Esophagus muscularis mucosa (tissue), 4 donors: ENCODE measurements at regions of chr2 and their contacts with region 1.

Region 1: DNA sequence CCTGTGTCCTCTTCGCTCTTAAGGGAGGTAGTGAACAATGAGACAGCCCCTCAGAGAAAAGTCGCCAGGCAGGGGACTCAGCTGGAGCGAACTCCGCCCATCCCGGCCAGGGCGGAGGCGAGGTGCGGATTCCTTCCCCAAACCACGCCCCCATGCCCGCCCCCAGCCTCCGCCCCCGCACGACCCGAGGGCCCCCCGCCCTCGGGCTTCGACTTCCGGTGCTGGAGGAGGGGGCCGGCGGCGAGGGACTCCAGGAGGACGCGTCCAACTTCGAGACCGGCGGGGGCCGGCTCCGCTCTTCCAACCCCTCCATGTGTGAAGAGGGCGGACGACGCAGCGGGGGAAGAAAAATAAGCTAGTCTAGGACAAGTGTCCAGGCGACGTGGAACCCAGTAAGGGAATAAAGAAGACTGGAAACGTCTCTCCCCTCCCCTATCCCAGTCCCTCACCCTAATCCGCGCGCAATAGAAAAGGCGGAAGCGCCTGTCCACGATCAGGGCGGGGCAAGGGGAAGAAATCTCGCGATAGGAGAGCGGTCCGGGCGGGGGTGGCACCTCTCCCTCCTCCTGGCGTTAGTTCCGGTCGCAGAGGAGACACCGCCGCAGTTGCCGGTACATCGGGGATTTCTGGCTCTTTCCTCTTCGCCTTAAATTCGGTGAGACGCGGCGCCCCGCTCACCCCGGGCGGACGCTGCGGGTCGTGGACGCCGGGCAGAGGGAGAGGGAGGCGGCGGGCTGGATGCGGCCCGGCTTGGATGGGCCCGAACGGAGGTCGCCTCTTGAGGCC is at the start of gene BZW1:
- DNase-seq: peak; percentile 98
- H3K4me3 ChIP-seq: peak within 1 kb of the TSS; percentile 80 to 100 (median 90)
- H3K27ac ChIP-seq: peak within 1 kb of the TSS; percentile 98 to 100 (median 99)
- H3K4me1 ChIP-seq: peaks cover 26 to 55% (median 53%) of the 10 kb centered on the region in 4 donors
- H3K27me3 ChIP-seq: no peaks in the 10 kb centered on the region
- CTCF ChIP-seq: no peak
- EP300 ChIP-seq: no peak
- POLR2A ChIP-seq: peak; percentile 97
- total RNA-seq, gene BZW1: 262 to 444 (median 376) TPM

Region 2: GRCh38 chr2:200658278-200658864 is 153.2 kb before region 1 on chr2:
- intact Hi-C with region 1: no loop called
- DNase-seq: peak; percentile 39
- H3K4me3 ChIP-seq: no peak overlapping the region
- H3K27ac ChIP-seq: no peak overlapping the region
- H3K4me1 ChIP-seq: no peaks in the 10 kb centered on the region
- H3K27me3 ChIP-seq: no peaks in the 10 kb centered on the region
- CTCF ChIP-seq: no peak
- EP300 ChIP-seq: no peak
- POLR2A ChIP-seq: no peak

Region 3: GRCh38 chr2:200713003-200713703 is 98.4 kb before region 1 on chr2:
- intact Hi-C with region 1: loop called (anchors 2 kb)
- DNase-seq: peak; percentile 94
- H3K4me3 ChIP-seq: peak overlapping the region; percentile 47 to 58 (median 52)
- H3K27ac ChIP-seq: peak overlapping the region; percentile 53 to 69 (median 62)
- H3K4me1 ChIP-seq: peaks cover 0 to 12% (median 5%) of the 10 kb centered on the region in 4 donors
- H3K27me3 ChIP-seq: no peaks in the 10 kb centered on the region
- CTCF ChIP-seq: peak; percentile 74 to 85 (median 84)
- EP300 ChIP-seq: no peak
- POLR2A ChIP-seq: no peak

Region 4: DNA sequence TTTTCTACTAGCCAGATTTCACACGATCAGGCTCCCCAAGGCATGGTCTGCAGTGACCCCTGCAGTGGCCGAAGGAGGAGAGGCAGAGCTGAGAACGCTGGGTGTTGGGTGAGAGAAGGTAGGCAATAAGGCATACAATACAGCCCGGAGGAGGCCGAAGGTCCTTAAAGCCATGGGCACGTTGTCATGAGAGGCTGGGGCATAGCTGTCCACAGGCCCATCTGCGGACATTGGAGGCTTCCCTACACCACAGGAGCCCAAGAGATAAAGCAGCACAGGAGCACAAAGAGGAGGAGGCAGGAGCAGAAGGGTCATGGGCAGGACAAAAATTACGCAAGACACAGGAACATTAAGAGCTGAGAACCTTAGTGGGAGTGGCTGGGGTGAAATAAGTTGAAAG is 16.5 kb before region 1 on chr2:
- intact Hi-C with region 1: no loop called
- DNase-seq: no peak
- H3K4me3 ChIP-seq: no peak overlapping the region
- H3K27ac ChIP-seq: no peak overlapping the region
- H3K4me1 ChIP-seq: peaks cover 0 to 14% (median 0%) of the 10 kb centered on the region in 4 donors
- H3K27me3 ChIP-seq: no peaks in the 10 kb centered on the region
- CTCF ChIP-seq: no peak
- EP300 ChIP-seq: no peak
- POLR2A ChIP-seq: no peak

Region 5: GRCh38 chr2:200864176-200864976 is 52.8 kb after region 1 on chr2 and contains the start of gene CLK1:
- intact Hi-C with region 1: loop called (anchors 5 kb)
- DNase-seq: peak; percentile 98
- H3K4me3 ChIP-seq: peak within 1 kb of the TSS; percentile 76 to 98 (median 90)
- H3K27ac ChIP-seq: peak within 1 kb of the TSS; percentile 98 to 100 (median 100)
- H3K4me1 ChIP-seq: peaks cover 19 to 58% (median 49%) of the 10 kb centered on the region in 4 donors
- H3K27me3 ChIP-seq: peaks cover 0 to 3% (median 0%) of the 10 kb centered on the region in 4 donors
- CTCF ChIP-seq: no peak
- EP300 ChIP-seq: peak; percentile 14
- POLR2A ChIP-seq: peak; percentile 96
- total RNA-seq, gene CLK1: 94.3 to 177 (median 108) TPM